A673 (cell line): ENCODE measurements at regions of chr10 and their contacts with region 1.

Region 1: GRCh38 chr10:128125944-128126764 is at the start of gene MKI67:
- DNase-seq: peak; percentile 98
- H3K4me3 ChIP-seq: peak within 1 kb of the TSS; percentile 97
- H3K27ac ChIP-seq: peak within 1 kb of the TSS; percentile 98
- H3K4me1 ChIP-seq: peaks cover 15% of the 10 kb centered on the region
- H3K27me3 ChIP-seq: no peaks in the 10 kb centered on the region
- CTCF ChIP-seq: no peak
- total RNA-seq, gene MKI67: 242 and 249 TPM in 2 replicates

Region 2: GRCh38 chr10:128277267-128277840 is 151.2 kb after region 1 on chr10:
- CTCF ChIA-PET with region 1: interaction called, 13 read pairs
- POLR2A ChIA-PET with region 1: no interaction called
- intact Hi-C with region 1: no loop called
- DNase-seq: peak; percentile 60
- H3K4me3 ChIP-seq: no peak overlapping the region
- H3K27ac ChIP-seq: no peak overlapping the region
- H3K4me1 ChIP-seq: peaks cover 43% of the 10 kb centered on the region
- H3K27me3 ChIP-seq: no peaks in the 10 kb centered on the region
- CTCF ChIP-seq: no peak